AG04450 (cell line): ENCODE measurements at regions of chr10 and their contacts with region 1.

Region 1: GRCh38 chr10:115829521-115830205 is 443.3 kb downstream of the GFRA1 start:
- DNase-seq: no peak
- H3K4me3 ChIP-seq: no peak overlapping the region
- H3K27ac ChIP-seq: no peak overlapping the region
- H3K27me3 ChIP-seq: no peaks in the 10 kb centered on the region
- CTCF ChIP-seq: peak; percentile 39

Region 2: DNA sequence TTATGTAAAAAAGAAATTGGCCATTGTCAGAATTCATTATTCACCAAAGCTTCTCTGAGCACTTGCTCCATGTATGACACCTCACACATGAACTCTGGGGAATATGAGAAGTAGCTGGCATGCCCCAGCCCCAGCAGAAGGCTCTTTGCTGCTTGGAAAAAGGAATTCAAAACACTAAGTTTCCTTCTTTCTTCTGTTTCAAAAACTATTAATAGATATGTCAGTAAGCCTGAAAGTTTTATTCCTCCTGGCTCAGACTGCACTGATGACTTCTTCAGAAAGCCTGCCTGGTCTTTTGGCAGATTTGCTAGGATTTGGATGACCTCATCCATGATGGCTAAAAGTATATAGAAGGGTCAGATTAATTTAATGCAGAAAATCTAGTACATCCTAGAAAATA is 67.6 kb before region 1 on chr10:
- CTCF ChIA-PET with region 1: no interaction called
- POLR2A ChIA-PET with region 1: no interaction called
- DNase-seq: no peak
- H3K4me3 ChIP-seq: no peak overlapping the region
- H3K27ac ChIP-seq: no peak overlapping the region
- H3K27me3 ChIP-seq: no peaks in the 10 kb centered on the region
- CTCF ChIP-seq: no peak

Region 3: DNA sequence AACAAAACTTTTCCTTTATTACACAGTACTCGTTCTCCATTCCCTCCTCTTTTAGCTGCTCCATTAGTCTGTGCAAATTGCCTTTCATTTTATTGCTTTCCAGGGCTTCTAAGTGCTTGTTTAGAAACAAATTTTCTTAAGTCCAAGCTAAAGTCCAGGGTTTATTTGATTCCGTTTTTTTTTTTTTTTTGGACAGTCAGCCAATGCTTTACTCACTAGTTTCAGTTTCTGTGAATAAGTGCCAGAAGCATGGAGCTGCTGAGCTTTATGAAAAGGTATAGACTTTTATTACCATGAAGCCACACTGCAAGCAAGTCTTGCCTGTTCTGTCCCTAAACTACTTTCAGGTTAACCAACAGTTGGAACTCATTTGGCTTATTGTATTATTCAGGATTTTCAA is 11.7 kb before region 1 on chr10:
- CTCF ChIA-PET with region 1: no interaction called
- POLR2A ChIA-PET with region 1: no interaction called
- DNase-seq: no peak
- H3K4me3 ChIP-seq: no peak overlapping the region
- H3K27ac ChIP-seq: no peak overlapping the region
- H3K27me3 ChIP-seq: no peaks in the 10 kb centered on the region
- CTCF ChIP-seq: no peak

Region 4: GRCh38 chr10:115844591-115844990 is 14.9 kb after region 1 on chr10:
- CTCF ChIA-PET with region 1: interaction called, 12 read pairs
- POLR2A ChIA-PET with region 1: interaction called, 3 read pairs
- DNase-seq: no peak
- H3K4me3 ChIP-seq: no peak overlapping the region
- H3K27ac ChIP-seq: no peak overlapping the region
- H3K27me3 ChIP-seq: no peaks in the 10 kb centered on the region
- CTCF ChIP-seq: no peak

Region 5: DNA sequence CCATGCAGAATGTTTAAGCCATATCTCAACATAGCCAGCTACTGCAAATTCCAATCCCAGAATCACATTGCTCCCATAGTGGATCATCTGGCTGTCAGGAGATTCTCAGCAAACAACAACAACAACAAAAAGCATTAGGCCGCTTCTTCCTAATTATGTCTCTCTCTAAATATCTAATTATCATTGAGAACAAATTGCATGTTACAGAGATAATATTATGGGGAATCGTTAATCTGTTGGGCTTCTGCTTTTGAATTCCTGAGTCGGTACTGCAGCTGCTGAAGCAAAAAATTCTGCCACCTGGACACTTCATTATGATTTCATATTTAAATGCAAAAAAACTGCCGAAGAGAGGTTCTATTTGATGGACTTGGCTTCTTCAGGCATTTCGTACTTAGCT is 54.7 kb after region 1 on chr10:
- CTCF ChIA-PET with region 1: no interaction called
- POLR2A ChIA-PET with region 1: no interaction called
- DNase-seq: no peak
- H3K4me3 ChIP-seq: no peak overlapping the region
- H3K27ac ChIP-seq: no peak overlapping the region
- H3K27me3 ChIP-seq: peaks cover 2% of the 10 kb centered on the region
- CTCF ChIP-seq: no peak